Right ventricle myocardium inferior (tissue), 1 donor: ENCODE measurements at regions of chr19 and their contacts with region 1.

Region 1: GRCh38 chr19:18251587-18252369 is 22.5 kb downstream of the IQCN start:
- DNase-seq: peak; percentile 75
- ATAC-seq: peak; percentile 67

Region 2: GRCh38 chr19:16970821-16971220 is 1281.0 kb before region 1 on chr19:
- intact Hi-C with region 1: loop called (anchors 10 kb)
- DNase-seq: no peak
- ATAC-seq: no peak

Region 3: DNA sequence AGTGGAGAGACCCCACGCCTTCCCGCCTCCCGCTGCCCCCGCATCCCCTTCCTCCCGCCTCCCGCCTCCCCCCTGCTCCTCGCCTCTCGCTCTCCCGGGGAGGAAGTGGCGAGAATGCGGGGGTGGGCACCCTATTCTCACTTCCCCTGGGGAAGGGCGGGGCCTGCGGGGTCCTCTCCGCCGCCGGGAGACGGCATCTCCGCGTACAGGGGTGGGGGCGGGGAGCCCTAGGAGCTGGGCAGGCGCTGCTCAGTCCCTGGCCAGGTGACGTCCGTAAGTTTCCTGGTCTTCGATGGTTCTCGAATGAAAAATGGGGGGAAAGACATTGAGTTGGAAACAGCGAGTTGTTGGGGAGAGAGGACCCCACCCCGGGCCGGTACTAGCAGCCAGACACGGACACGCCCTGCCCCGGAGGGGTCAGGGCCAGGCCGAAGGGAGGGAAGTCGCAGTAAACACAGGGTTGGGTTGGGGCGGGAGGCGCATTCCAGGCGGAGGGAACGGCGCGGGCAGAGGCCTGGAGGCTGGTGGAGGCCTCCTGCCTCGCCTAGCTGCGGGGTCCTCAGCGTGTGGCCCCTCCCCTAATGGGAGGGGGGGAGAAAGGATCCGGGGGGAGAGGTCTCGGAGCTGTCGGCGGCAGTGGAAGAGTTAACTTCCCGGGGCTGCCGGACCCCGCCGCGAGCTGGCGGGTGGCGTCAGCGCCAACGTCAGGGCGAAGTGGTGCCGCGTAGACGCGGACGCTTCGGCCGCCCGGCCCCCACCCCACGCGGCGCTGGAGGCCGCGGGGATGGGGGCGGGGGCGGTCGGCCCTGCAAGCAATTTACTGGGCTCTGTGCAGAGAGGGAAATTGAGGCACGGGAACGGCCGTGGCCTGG is 40.0 kb after region 1 on chr19:
- intact Hi-C with region 1: no loop called
- DNase-seq: peak; percentile 94
- ATAC-seq: peak; percentile 81